ENCODE measurements at regions of chr7 and their contacts with region 1.

Region 1: DNA sequence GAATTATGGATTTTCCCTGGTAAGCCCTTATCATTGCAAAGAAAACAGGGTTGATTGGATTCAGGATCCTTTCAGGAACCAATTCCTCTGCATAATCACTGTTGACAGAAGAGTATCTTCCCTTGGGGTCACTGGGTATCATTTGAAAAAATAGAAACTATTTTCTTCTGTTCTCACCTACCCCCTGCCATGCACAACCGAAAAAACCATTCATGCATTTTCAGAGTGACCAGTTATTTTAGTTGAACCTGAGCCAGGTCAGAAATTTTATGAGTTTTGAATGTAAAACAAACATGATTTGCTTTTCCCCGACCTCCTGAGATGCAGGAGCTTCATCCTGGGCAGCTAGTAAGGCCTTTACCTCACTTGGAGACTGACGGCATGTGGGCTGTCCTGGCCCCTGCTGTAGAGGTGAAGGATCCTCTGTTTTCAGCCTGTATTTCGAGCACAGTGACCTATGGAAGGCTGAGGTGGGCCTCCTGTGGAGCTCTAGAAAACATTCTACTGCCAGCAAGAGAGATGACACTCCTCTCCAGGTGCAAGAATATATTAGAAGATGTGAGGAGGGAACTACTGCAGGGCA is 30.1 kb downstream of the TMEM178B start:
- DNase-seq: no peak
- H3K4me3 ChIP-seq: no peak overlapping the region
- H3K27ac ChIP-seq: no peak overlapping the region
- H3K4me1 ChIP-seq: no peaks in the 10 kb centered on the region
- H3K27me3 ChIP-seq: no peaks in the 10 kb centered on the region
- CTCF ChIP-seq: no peak

Region 2: DNA sequence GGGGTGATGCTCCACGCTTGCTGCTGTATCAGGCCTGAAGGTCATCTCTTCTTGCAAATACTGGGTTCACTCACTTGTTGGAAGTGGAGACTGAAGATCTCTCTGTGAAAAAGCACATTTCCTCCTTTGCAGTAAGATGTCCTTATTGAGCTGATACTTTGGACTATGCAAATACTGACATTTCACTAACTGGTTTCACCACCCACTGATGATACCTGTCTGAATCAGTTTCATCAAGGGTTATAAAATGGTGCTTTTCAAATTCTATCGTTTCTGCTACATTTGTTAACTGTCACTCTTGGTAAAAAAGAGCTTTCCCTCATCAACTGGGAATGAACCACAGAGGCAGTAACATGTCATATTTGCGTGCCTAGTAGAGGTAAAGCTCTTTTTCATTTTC is 664.6 kb before region 1 on chr7:
- CTCF ChIA-PET with region 1: no interaction called
- POLR2A ChIA-PET with region 1: interaction called, 14 read pairs
- intact Hi-C with region 1: no loop called
- DNase-seq: no peak
- H3K4me3 ChIP-seq: no peak overlapping the region
- H3K27ac ChIP-seq: no peak overlapping the region
- H3K4me1 ChIP-seq: no peaks in the 10 kb centered on the region
- H3K27me3 ChIP-seq: no peaks in the 10 kb centered on the region
- CTCF ChIP-seq: no peak

Region 3: GRCh38 chr7:140914083-140914482 is 189.9 kb before region 1 on chr7:
- CTCF ChIA-PET with region 1: no interaction called
- POLR2A ChIA-PET with region 1: no interaction called
- intact Hi-C with region 1: no loop called
- DNase-seq: no peak
- H3K4me3 ChIP-seq: no peak overlapping the region
- H3K27ac ChIP-seq: no peak overlapping the region
- H3K4me1 ChIP-seq: peaks cover 17% of the 10 kb centered on the region
- H3K27me3 ChIP-seq: no peaks in the 10 kb centered on the region
- CTCF ChIP-seq: no peak

Region 4: DNA sequence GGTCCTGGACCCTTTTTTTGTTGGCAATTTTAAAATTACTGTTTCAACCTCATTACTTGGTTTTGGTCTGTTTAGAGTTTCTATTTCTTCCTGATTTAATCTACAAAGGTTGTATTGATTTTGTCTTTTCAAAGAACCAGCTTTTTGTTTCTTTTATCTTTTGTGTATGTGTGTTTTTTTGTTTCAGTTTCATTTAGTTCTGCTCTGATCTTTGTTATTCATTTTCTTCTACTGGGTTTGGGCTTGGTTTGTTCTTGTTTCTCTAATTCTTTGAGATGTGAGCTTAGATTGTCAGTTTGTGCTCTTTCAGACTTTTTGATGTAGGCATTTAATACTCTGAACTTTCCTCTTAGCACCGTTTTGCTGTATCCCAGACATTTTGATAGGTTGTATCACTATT is 80.6 kb before region 1 on chr7:
- CTCF ChIA-PET with region 1: no interaction called
- POLR2A ChIA-PET with region 1: no interaction called
- intact Hi-C with region 1: no loop called
- DNase-seq: no peak
- H3K4me3 ChIP-seq: no peak overlapping the region
- H3K27ac ChIP-seq: no peak overlapping the region
- H3K4me1 ChIP-seq: no peaks in the 10 kb centered on the region
- H3K27me3 ChIP-seq: peaks cover 5% of the 10 kb centered on the region
- CTCF ChIP-seq: no peak

Region 5: GRCh38 chr7:141184532-141185190 is 80.7 kb after region 1 on chr7:
- CTCF ChIA-PET with region 1: no interaction called
- POLR2A ChIA-PET with region 1: no interaction called
- intact Hi-C with region 1: no loop called
- DNase-seq: no peak
- H3K4me3 ChIP-seq: no peak overlapping the region
- H3K27ac ChIP-seq: no peak overlapping the region
- H3K4me1 ChIP-seq: no peaks in the 10 kb centered on the region
- H3K27me3 ChIP-seq: no peaks in the 10 kb centered on the region
- CTCF ChIP-seq: no peak

Region 6: GRCh38 chr7:141477865-141478264 is 373.9 kb after region 1 on chr7:
- CTCF ChIA-PET with region 1: no interaction called
- POLR2A ChIA-PET with region 1: no interaction called
- intact Hi-C with region 1: no loop called
- DNase-seq: no peak
- H3K4me3 ChIP-seq: no peak overlapping the region
- H3K27ac ChIP-seq: no peak overlapping the region
- H3K4me1 ChIP-seq: no peaks in the 10 kb centered on the region
- H3K27me3 ChIP-seq: no peaks in the 10 kb centered on the region
- CTCF ChIP-seq: no peak